Heart right ventricle (tissue), 16 donors: ENCODE measurements at regions of chr9 and their contacts with region 1.

Region 1: GRCh38 chr9:27340961-27341511 is 44.1 kb upstream of the EQTN start:
- DNase-seq: no peak
- ATAC-seq: peak in 2 of 8 donors; percentile 21 to 41
- H3K4me3 ChIP-seq: no peak overlapping the region
- H3K27ac ChIP-seq: peak overlapping the region in 1 of 10 donors; percentile 46
- H3K4me1 ChIP-seq: peaks cover 5 to 49% (median 34%) of the 10 kb centered on the region in 9 donors
- H3K27me3 ChIP-seq: no peaks in the 10 kb centered on the region
- CTCF ChIP-seq: no peak

Region 2: DNA sequence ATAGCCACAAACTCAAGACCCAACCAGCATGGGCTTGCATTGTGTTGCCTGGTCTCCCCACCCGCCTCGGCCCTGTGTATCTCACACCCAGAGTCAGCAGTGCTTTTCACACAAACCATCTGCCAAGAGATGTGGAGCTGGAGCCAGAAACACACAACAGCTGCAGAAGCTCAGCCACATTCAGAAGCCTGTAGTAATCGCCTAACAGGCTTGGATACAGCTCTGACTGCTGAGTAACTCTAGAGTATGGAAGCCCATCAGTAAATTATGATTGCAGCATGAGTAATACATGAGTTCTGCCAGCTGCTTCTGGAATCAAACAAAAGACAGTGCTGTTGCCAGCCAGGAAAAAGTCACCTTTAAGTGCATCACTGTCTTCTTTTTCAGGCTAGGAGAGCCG is 216.0 kb before region 1 on chr9:
- intact Hi-C with region 1: no loop called
- DNase-seq: peak; percentile 49 to 61
- ATAC-seq: peak; percentile 90 to 98 (median 92)
- H3K4me3 ChIP-seq: no peak overlapping the region
- H3K27ac ChIP-seq: peak overlapping the region in 6 of 10 donors; percentile 13 to 70 (median 44)
- H3K4me1 ChIP-seq: peaks cover 0 to 65% (median 25%) of the 10 kb centered on the region in 9 donors
- H3K27me3 ChIP-seq: no peaks in the 10 kb centered on the region
- CTCF ChIP-seq: no peak

Region 3: GRCh38 chr9:27394154-27394825 is 53.3 kb after region 1 on chr9:
- intact Hi-C with region 1: loop called in 1 of 10 experiments (anchors 10 kb)
- DNase-seq: peak in 1 of 2 donors; percentile 10
- ATAC-seq: peak; percentile 33 to 85 (median 68)
- H3K4me3 ChIP-seq: no peak overlapping the region
- H3K27ac ChIP-seq: peak overlapping the region in 3 of 10 donors; percentile 3 to 46 (median 39)
- H3K4me1 ChIP-seq: peaks cover 0 to 28% (median 18%) of the 10 kb centered on the region in 9 donors
- H3K27me3 ChIP-seq: no peaks in the 10 kb centered on the region
- CTCF ChIP-seq: no peak

Region 4: DNA sequence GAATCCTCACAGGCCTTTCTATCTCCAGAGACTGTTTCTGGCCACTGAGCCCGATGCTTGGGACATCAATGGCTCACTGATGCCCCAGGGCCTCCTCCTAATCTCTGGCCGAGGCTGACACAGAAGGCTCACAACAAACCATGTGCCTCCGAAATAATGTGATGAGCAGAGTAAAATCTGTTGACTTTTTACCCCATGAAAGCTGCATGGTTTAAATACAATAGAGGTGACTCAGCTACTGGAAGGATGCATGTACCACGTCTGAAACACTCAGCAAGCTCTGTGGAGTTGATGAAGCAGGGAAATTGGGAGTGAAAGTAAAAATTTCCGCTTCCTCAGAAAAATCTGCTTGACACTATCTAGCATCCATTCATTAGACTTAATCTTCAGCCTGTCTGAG is 67.0 kb after region 1 on chr9:
- intact Hi-C with region 1: loop called in 1 of 10 experiments (anchors 10 kb)
- DNase-seq: no peak
- ATAC-seq: peak in 1 of 8 donors; percentile 15
- H3K4me3 ChIP-seq: no peak overlapping the region
- H3K27ac ChIP-seq: no peak overlapping the region
- H3K4me1 ChIP-seq: peaks cover 0 to 24% (median 17%) of the 10 kb centered on the region in 9 donors
- H3K27me3 ChIP-seq: no peaks in the 10 kb centered on the region
- CTCF ChIP-seq: no peak

Region 5: DNA sequence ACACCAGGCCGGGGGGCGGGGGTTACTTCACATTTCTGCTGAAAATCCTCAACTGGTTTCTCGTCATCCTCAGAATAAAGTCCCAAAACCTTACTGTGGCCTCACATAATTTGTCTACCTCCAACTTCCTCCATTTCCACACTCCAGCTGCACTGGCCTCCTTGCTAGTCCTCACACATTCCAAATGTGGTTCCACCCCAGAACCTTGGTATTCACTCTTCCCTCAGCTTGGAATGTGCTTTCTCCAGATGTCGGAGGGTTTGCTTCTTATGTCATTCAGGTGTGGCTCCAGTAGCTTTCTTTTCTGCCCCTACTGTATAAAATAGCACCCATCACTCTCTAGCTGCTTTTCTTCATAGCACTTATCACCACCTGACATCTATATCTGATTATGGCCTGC is 80.5 kb after region 1 on chr9:
- intact Hi-C with region 1: loop called in 1 of 10 experiments (anchors 5 kb)
- DNase-seq: no peak
- ATAC-seq: no peak
- H3K4me3 ChIP-seq: no peak overlapping the region
- H3K27ac ChIP-seq: no peak overlapping the region
- H3K4me1 ChIP-seq: peaks cover 0 to under 1% (median 0%) of the 10 kb centered on the region in 9 donors
- H3K27me3 ChIP-seq: no peaks in the 10 kb centered on the region
- CTCF ChIP-seq: no peak